Activated CD4-positive, alpha-beta memory T cell treated with anti-CD3 and anti-CD28 coated beads for 36 hours (primary cell): ENCODE measurements at regions of chr2 and their contacts with region 1.

Region 1: DNA sequence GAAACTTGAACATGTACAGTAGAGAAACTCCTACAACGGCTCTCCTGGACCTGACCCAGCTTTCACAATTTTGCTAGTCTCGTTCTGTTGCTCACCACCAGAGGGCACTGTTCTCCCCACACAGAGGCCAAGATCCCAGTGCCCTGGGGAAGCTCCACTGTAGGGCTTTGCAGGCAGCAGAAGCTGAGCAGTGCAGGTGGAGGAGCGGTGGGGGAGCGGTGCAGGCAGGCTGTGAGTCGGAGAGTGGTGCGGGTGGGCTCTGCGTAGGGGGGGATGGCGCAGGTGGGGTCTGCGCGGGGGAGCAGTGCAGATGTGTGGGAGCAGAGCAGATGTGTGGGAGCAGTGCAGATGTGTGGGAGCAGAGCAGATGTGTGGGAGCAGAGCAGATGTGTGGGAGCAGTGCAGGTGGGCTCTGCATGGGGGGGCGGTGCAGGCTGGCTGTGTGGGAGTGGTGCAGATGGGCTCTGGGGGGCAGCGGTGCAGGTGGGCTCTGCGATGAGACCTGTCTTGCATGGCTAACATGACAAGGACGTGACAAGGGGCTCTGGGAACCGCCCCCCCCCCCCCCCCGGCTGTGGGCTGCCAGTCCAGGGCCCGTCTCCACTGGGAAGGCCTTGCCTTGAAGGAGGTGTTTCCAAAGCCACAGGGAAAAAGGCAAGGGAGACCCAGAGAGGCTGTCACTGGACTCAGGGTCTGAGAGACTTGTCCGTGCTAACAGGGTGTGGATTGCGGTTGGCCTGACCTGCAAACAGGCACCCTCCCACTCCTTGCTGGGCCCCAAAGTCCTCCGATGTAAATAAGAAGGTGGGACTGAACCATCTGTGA is 7.3 kb downstream of the CYS1 start:
- DNase-seq: peak; percentile 86
- H3K4me3 Mint-ChIP-seq: no peak overlapping the region
- H3K27ac Mint-ChIP-seq: no peak overlapping the region
- H3K4me1 Mint-ChIP-seq: peaks cover 4% of the 10 kb centered on the region
- H3K27me3 Mint-ChIP-seq: peaks cover 37% of the 10 kb centered on the region

Region 2: GRCh38 chr2:10057231-10058107 is 15.4 kb before region 1 on chr2:
- CTCF ChIA-PET with region 1: interaction called, 17 read pairs
- POLR2A ChIA-PET with region 1: no interaction called
- intact Hi-C with region 1: no loop called
- DNase-seq: peak; percentile 56
- H3K4me3 Mint-ChIP-seq: peak overlapping the region; percentile 1
- H3K27ac Mint-ChIP-seq: no peak overlapping the region
- H3K4me1 Mint-ChIP-seq: peaks cover 1% of the 10 kb centered on the region
- H3K27me3 Mint-ChIP-seq: no peaks in the 10 kb centered on the region

Region 3: GRCh38 chr2:10091182-10091888 is 18.5 kb after region 1 on chr2:
- CTCF ChIA-PET with region 1: interaction called, 125 read pairs
- POLR2A ChIA-PET with region 1: no interaction called
- intact Hi-C with region 1: no loop called
- DNase-seq: peak; percentile 27
- H3K4me3 Mint-ChIP-seq: peak overlapping the region; percentile 61
- H3K27ac Mint-ChIP-seq: no peak overlapping the region
- H3K4me1 Mint-ChIP-seq: peaks cover 3% of the 10 kb centered on the region
- H3K27me3 Mint-ChIP-seq: peaks cover 49% of the 10 kb centered on the region

Region 4: GRCh38 chr2:10097352-10098148 is 24.7 kb after region 1 on chr2:
- CTCF ChIA-PET with region 1: interaction called, 125 read pairs
- POLR2A ChIA-PET with region 1: no interaction called
- intact Hi-C with region 1: loop called (anchors 1 kb)
- DNase-seq: peak; percentile 50
- H3K4me3 Mint-ChIP-seq: no peak overlapping the region
- H3K27ac Mint-ChIP-seq: no peak overlapping the region
- H3K4me1 Mint-ChIP-seq: no peaks in the 10 kb centered on the region
- H3K27me3 Mint-ChIP-seq: peaks cover 21% of the 10 kb centered on the region

Region 5: GRCh38 chr2:10103179-10103732 is 30.4 kb after region 1 on chr2:
- CTCF ChIA-PET with region 1: interaction called, 125 read pairs
- POLR2A ChIA-PET with region 1: no interaction called
- intact Hi-C with region 1: no loop called
- DNase-seq: no peak
- H3K4me3 Mint-ChIP-seq: no peak overlapping the region
- H3K27ac Mint-ChIP-seq: no peak overlapping the region
- H3K4me1 Mint-ChIP-seq: no peaks in the 10 kb centered on the region
- H3K27me3 Mint-ChIP-seq: peaks cover 1% of the 10 kb centered on the region

Region 6: GRCh38 chr2:10668402-10669012 is 595.6 kb after region 1 on chr2:
- CTCF ChIA-PET with region 1: no interaction called
- POLR2A ChIA-PET with region 1: no interaction called
- intact Hi-C with region 1: loop called (anchors 1 kb)
- DNase-seq: no peak
- H3K4me3 Mint-ChIP-seq: no peak overlapping the region
- H3K27ac Mint-ChIP-seq: no peak overlapping the region
- H3K4me1 Mint-ChIP-seq: no peaks in the 10 kb centered on the region
- H3K27me3 Mint-ChIP-seq: no peaks in the 10 kb centered on the region